Heart right ventricle (tissue), 16 donors: ENCODE measurements at regions of chr17 and their contacts with region 1.

Region 1: GRCh38 chr17:49180303-49180702 is 30.1 kb downstream of the GNGT2 start:
- DNase-seq: peak; percentile 59 to 66
- ATAC-seq: peak in 6 of 8 donors; percentile 49 to 81 (median 62)
- H3K4me3 ChIP-seq: no peak overlapping the region
- H3K27ac ChIP-seq: no peak overlapping the region
- H3K4me1 ChIP-seq: peaks cover 0 to 4% (median 0%) of the 10 kb centered on the region in 9 donors
- H3K27me3 ChIP-seq: peaks cover 0 to 4% (median 0%) of the 10 kb centered on the region in 7 donors
- CTCF ChIP-seq: peak; percentile 57 to 84 (median 76)

Region 2: GRCh38 chr17:49285716-49286115 is 105.4 kb after region 1 on chr17:
- intact Hi-C with region 1: loop called in 7 of 10 experiments (anchors 1 to 5 kb)
- DNase-seq: no peak
- ATAC-seq: no peak
- H3K4me3 ChIP-seq: no peak overlapping the region
- H3K27ac ChIP-seq: no peak overlapping the region
- H3K4me1 ChIP-seq: no peaks in the 10 kb centered on the region
- H3K27me3 ChIP-seq: no peaks in the 10 kb centered on the region
- CTCF ChIP-seq: no peak

Region 3: GRCh38 chr17:49290690-49291359 is 110.5 kb after region 1 on chr17:
- intact Hi-C with region 1: loop called in 7 of 10 experiments (anchors 1 to 5 kb)
- DNase-seq: peak in 1 of 2 donors; percentile 17
- ATAC-seq: peak in 1 of 8 donors; percentile 30
- H3K4me3 ChIP-seq: no peak overlapping the region
- H3K27ac ChIP-seq: no peak overlapping the region
- H3K4me1 ChIP-seq: no peaks in the 10 kb centered on the region
- H3K27me3 ChIP-seq: no peaks in the 10 kb centered on the region
- CTCF ChIP-seq: peak; percentile 53 to 82 (median 75)

Region 4: DNA sequence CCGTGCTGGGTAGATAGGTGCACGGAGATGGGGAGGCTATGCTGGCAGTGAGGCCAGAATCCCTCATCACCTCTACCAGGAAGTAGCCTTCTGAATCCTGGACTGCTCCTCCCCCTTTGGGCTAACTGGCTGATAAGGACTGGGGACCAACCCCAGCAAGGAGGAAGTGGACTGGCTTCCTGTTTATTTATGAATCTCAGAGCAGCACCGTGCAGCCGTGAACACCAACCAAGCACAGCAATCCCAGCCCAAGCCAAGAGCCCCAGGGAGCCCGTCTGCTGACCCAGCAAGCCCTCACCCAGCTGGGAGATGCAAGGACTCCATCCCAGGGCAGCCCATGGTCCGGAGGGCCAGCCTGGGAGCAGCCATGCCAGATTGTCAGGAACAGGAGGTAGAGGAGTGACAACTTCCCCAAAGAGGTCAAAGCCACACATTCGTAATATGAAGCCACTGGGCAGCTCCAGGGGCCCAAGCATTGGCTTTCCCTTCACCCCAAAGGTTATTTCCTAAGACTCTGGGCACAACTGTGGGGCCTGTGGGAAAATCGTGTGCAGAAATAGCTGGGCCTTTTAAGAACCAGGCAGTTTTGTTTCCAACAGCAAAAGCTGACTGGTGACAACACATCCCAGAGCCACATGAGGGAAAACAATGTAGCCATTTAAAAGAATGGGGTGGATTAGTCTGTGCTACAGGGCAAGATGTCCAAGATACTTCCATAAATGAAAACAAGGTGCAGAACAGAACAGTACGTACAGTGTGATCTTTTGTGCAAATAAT is 210.4 kb after region 1 on chr17:
- intact Hi-C with region 1: loop called in 3 of 10 experiments (anchors 10 kb)
- DNase-seq: no peak
- ATAC-seq: peak; percentile 39 to 76 (median 57)
- H3K4me3 ChIP-seq: peak overlapping the region in 2 of 10 donors; percentile 2 to 38
- H3K27ac ChIP-seq: peak overlapping the region in 5 of 10 donors; percentile 12 to 90 (median 58)
- H3K4me1 ChIP-seq: peaks cover 0 to 75% (median 8%) of the 10 kb centered on the region in 9 donors
- H3K27me3 ChIP-seq: no peaks in the 10 kb centered on the region
- CTCF ChIP-seq: no peak